ENCODE measurements at regions of chr3 and their contacts with region 1.

Region 1: GRCh38 chr3:176273935-176274560 is 923.2 kb downstream of the TBL1XR1 start:
- DNase-seq: no peak
- H3K4me3 ChIP-seq: no peak overlapping the region
- H3K27ac ChIP-seq: no peak overlapping the region
- H3K4me1 ChIP-seq: no peaks in the 10 kb centered on the region
- H3K27me3 ChIP-seq: no peaks in the 10 kb centered on the region
- CTCF ChIP-seq: no peak
- POLR2A ChIP-seq: no peak

Region 2: GRCh38 chr3:175041369-175041768 is 1232.7 kb before region 1 on chr3:
- intact Hi-C with region 1: loop called (anchors 5 kb)
- DNase-seq: no peak
- H3K4me3 ChIP-seq: no peak overlapping the region
- H3K27ac ChIP-seq: no peak overlapping the region
- H3K4me1 ChIP-seq: no peaks in the 10 kb centered on the region
- H3K27me3 ChIP-seq: no peaks in the 10 kb centered on the region
- CTCF ChIP-seq: no peak
- POLR2A ChIP-seq: no peak

Region 3: DNA sequence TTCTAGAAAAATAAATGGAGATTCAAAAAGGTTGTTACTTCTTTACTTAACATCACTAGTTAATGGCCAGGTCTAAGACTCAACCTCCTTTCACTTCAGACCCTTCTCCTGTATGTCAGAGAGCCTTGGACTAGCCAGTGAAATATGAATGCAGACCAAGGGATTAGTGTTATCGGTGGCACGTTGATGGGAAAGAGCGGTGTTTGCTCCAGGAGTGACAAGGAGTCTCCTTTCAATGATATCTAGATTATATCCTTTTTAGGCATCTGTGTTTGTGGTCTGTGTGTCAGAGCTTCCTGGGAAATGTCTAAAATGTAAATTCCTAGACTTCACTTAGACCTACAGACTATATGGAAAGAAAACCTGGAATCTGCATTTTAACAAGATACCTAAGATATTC is 1604.1 kb after region 1 on chr3:
- intact Hi-C with region 1: loop called (anchors 10 kb)
- DNase-seq: no peak
- H3K4me3 ChIP-seq: no peak overlapping the region
- H3K27ac ChIP-seq: no peak overlapping the region
- H3K4me1 ChIP-seq: no peaks in the 10 kb centered on the region
- H3K27me3 ChIP-seq: no peaks in the 10 kb centered on the region
- CTCF ChIP-seq: no peak
- POLR2A ChIP-seq: no peak